T-cell (primary cell): ENCODE measurements at regions of chr4 and their contacts with region 1.

Region 1: DNA sequence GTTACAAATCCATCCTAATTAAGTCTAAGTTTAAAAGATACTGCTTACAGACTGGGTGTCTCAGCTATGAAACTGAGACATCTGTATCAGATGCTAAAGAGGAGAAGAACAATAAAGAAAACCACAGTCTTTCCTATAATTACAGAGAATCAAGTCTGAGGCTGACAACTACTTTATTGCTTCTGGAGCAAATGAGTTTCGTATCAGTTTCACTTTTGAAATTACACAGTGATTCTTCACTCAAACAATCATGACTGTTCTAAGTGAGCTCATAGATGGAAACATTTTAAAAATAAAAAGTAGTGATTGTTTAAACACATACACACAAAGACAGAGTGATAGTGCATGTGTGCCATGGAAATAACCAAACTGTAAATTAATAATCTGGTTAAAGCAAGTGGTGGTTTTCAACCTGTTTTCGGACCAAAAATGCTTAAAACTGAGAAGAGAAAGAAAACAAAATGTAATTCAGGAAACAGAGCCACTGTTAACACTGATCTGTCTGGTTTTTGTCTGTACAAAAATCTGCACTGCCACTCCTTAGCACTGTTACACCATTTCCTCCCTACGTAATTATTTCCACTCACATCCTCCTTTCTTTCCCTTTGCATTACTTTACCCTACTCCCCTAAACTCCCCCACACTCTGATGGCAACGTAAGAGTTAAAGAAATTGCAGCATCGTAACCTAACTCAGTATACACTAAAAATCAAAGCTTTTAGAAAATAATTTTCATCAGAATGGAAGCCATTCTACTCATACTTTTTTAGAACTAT is 12.5 kb downstream of the RFC1 start:
- DNase-seq: peak in 3 of 35 experiments; percentile 5 to 69 (median 21)
- ATAC-seq: peak; percentile 78 to 86 (median 81)
- H3K4me3 ChIP-seq: peak overlapping the region; percentile 51
- H3K4me3 Mint-ChIP-seq: peak overlapping the region; percentile 78 to 80 (median 80)
- H3K27ac ChIP-seq: peak overlapping the region; percentile 95
- H3K27ac Mint-ChIP-seq: peak overlapping the region; percentile 98 to 99
- H3K4me1 ChIP-seq: peaks cover 22% of the 10 kb centered on the region in 2 experiments
- H3K4me1 Mint-ChIP-seq: peaks cover 49 to 68% (median 57%) of the 10 kb centered on the region in 3 donors
- H3K27me3 ChIP-seq: no peaks in the 10 kb centered on the region
- H3K27me3 Mint-ChIP-seq: no peaks in the 10 kb centered on the region

Region 2: GRCh38 chr4:39331191-39331590 is 22.5 kb before region 1 on chr4:
- CTCF ChIA-PET with region 1: no interaction called
- POLR2A ChIA-PET with region 1: no interaction called
- DNase-seq: no peak
- ATAC-seq: no peak
- H3K4me3 ChIP-seq: no peak overlapping the region
- H3K4me3 Mint-ChIP-seq: no peak overlapping the region
- H3K27ac ChIP-seq: no peak overlapping the region
- H3K27ac Mint-ChIP-seq: no peak overlapping the region
- H3K4me1 ChIP-seq: no peaks in the 10 kb centered on the region
- H3K4me1 Mint-ChIP-seq: peaks cover 30 to 42% (median 40%) of the 10 kb centered on the region in 3 donors
- H3K27me3 ChIP-seq: no peaks in the 10 kb centered on the region
- H3K27me3 Mint-ChIP-seq: no peaks in the 10 kb centered on the region

Region 3: DNA sequence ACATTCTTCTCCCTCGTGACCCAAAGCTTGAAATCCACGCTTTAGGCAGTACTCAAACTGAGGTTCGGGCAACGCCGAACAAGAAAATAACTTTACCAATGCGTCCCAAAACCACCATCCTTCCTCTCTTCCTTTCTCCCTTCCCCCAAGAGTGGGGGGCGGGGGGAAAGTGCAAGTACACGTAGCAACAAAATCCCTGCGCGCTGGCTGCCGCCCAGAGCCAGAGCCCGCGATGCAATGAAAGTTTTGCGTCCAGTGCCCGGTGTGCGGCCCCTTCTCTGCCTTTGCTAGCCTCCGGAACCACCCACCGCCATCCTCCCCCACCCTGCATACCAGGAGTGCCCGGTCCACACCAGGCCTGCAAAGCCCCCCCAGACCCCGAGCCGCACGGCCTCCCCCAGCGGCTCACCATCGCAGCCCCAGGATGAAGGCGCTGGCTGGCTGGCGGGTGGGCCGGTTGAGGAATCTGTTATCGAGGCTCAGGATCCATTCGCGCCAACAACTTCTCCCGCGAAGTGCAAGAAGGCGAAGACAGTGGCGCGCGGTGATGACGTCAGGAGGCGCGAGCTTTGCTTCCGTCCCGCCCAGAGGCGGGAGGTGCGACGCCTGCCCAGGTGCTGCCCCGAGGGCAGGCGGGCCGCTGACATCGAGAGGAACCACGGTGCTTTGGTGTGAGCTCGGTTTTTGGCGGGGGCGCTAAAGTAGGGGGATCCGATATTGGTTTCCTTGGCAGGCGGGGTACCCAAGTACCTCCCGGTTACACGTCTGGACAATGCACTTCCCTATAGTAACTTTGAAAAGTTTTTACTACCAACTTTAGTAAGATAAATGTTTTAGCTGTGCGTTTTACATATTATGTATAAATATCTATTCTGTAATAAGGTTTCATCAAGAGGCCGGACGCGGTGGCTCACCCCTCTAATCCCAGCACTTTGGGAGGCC is 12.4 kb after region 1 on chr4 and contains the start of gene RFC1:
- CTCF ChIA-PET with region 1: interaction called, 11 to 12 read pairs
- POLR2A ChIA-PET with region 1: interaction called, 4 to 15 read pairs
- DNase-seq: peak; percentile 82 to 98 (median 92)
- ATAC-seq: peak; percentile 94 to 99 (median 98)
- H3K4me3 ChIP-seq: peak within 1 kb of the TSS; percentile 85 to 97
- H3K4me3 Mint-ChIP-seq: peak within 1 kb of the TSS; percentile 90 to 95 (median 91)
- H3K27ac ChIP-seq: peak within 1 kb of the TSS; percentile 69
- H3K27ac Mint-ChIP-seq: peak within 1 kb of the TSS; percentile 86
- H3K4me1 ChIP-seq: peaks cover 22 to 23% of the 10 kb centered on the region in 2 experiments
- H3K4me1 Mint-ChIP-seq: peaks cover 43 to 50% (median 47%) of the 10 kb centered on the region in 3 donors
- H3K27me3 ChIP-seq: no peaks in the 10 kb centered on the region
- H3K27me3 Mint-ChIP-seq: no peaks in the 10 kb centered on the region
- total RNA-seq, gene RFC1: 45.7 to 77.4 (median 54.5) TPM

Region 4: DNA sequence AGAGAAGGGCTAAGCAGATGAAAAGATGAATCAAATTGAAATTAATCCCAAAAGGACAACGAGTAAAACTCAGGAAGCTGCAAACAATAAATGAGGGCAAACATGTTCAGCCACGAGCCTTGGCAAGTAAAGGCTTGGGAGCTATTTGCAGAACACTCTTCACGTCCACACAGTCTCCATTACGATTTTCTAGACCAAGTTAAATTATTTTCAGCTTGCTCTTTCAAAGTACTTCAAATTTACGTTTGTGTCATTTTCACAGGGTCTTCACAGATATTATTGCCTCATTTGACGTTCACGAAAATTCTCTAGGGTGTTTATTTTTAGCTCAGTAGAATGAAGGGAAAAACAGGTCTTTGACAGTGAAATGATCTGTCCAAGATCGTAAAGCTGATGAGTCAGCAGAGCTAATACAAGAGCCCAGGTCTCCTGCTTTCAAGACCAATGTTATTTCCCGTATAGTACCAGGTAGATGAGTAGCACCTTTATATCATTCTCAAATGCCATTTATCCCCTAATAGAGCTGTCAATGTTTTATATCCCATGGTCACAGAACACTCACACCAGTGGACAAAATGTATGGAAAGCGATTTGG is 74.0 kb after region 1 on chr4:
- CTCF ChIA-PET with region 1: no interaction called
- POLR2A ChIA-PET with region 1: interaction called in 1 of 2 experiments, 10 read pairs
- DNase-seq: no peak
- ATAC-seq: no peak
- H3K4me3 ChIP-seq: no peak overlapping the region
- H3K4me3 Mint-ChIP-seq: no peak overlapping the region
- H3K27ac ChIP-seq: no peak overlapping the region
- H3K27ac Mint-ChIP-seq: no peak overlapping the region
- H3K4me1 ChIP-seq: no peaks in the 10 kb centered on the region
- H3K4me1 Mint-ChIP-seq: no peaks in the 10 kb centered on the region
- H3K27me3 ChIP-seq: no peaks in the 10 kb centered on the region
- H3K27me3 Mint-ChIP-seq: no peaks in the 10 kb centered on the region

Region 5: DNA sequence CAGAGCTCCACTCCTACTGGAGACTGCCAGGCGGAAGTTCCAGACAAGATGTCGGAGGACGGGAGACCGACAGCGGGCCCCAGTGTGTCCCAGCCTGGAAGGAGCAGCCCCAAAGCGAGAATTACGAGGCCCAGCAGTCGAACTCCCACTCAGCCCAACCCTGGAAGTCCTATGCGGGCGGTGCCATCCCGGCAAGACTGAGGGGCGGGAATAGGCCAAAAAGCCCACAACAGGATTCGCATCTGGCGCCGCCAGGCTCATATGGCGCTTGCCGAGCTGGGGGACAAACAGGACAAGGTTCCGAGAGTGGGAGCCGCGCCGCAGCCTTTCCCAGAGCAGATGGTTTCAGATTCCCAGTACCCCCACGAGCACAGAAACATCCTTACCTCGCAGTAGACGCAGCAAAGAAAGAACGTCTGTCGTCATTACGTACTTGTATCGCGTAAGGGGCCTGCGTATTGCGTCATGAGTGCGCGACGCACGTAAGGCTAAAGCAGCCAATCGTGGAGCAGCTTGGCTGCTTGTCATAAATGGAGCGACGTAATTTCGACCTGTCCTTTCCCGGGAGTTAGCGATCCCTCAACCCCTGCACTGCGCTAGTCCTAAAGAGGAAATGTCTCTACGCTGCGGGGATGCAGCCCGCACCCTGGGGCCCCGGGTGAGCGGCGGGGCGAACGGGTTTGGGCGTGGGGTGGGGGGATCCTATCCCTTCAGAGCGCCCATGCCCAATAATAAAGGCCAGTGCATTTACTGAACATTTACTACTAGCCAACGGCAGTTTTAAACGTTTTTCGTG is 105.0 kb after region 1 on chr4 and contains the starts of genes LIAS and RPL9:
- CTCF ChIA-PET with region 1: interaction called in 1 of 2 experiments, 5 read pairs
- POLR2A ChIA-PET with region 1: interaction called, 7 to 10 read pairs
- DNase-seq: peak; percentile 80 to 99 (median 91)
- ATAC-seq: peak; percentile 85 to 86 (median 86)
- H3K4me3 ChIP-seq: peak within 1 kb of the TSS; percentile 77 to 98
- H3K4me3 Mint-ChIP-seq: peak within 1 kb of the TSS; percentile 92 to 96 (median 95)
- H3K27ac ChIP-seq: peak within 1 kb of the TSS; percentile 97
- H3K27ac Mint-ChIP-seq: peak within 1 kb of the TSS; percentile 98 to 99
- H3K4me1 ChIP-seq: peaks cover 15 to 20% of the 10 kb centered on the region in 2 experiments
- H3K4me1 Mint-ChIP-seq: peaks cover 49 to 57% (median 51%) of the 10 kb centered on the region in 3 donors
- H3K27me3 ChIP-seq: no peaks in the 10 kb centered on the region
- H3K27me3 Mint-ChIP-seq: no peaks in the 10 kb centered on the region
- total RNA-seq, gene LIAS: 11.3 to 22.8 (median 19.5) TPM
- total RNA-seq, gene RPL9: 2,481 to 3,129 (median 2,646) TPM

Region 6: DNA sequence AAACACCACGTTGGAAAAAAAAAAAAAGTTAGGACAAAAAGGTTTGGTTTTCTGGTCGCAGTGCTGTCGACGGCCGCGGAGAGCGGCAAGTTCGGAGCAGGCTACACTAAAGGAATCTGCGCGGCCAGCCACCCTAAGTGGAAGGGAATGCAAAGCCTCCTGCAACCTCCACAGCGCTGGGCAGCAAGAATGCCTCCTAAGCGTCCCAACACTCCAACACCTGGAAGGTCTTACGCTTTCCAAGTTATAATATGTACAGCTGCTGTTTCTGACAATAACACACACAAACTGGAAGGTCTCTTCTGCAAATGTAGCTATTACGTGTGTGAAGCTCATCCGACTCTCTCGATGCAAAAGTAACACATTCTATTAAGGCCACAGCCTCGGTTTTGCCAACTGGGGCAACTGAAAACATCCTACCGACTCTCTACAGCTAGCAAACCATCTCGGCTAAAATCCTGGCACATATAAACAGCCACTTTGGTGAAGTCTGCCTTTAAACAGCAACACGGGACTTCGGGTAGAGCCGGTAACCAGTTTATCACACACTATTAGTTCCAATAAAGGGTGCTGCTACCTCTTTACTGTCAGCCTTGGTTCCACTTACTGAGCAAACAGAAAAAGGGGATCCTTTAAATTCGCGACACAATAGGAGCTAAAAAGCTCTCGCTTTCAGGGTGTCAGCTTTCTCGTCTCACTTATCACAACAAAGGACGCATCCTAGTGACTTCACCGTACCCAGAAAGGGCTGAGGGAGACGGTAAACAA is 284.1 kb after region 1 on chr4:
- CTCF ChIA-PET with region 1: no interaction called
- POLR2A ChIA-PET with region 1: interaction called in 1 of 2 experiments, 15 read pairs
- DNase-seq: peak in 28 of 35 experiments; percentile 2 to 61 (median 14)
- ATAC-seq: peak; percentile 17 to 42 (median 30)
- H3K4me3 ChIP-seq: peak overlapping the region; percentile 85 to 86
- H3K4me3 Mint-ChIP-seq: peak overlapping the region; percentile 90 to 93 (median 93)
- H3K27ac ChIP-seq: peak overlapping the region; percentile 68
- H3K27ac Mint-ChIP-seq: peak overlapping the region; percentile 90 to 95
- H3K4me1 ChIP-seq: peaks cover 8 to 19% of the 10 kb centered on the region in 2 experiments
- H3K4me1 Mint-ChIP-seq: peaks cover 42 to 49% (median 43%) of the 10 kb centered on the region in 3 donors
- H3K27me3 ChIP-seq: no peaks in the 10 kb centered on the region
- H3K27me3 Mint-ChIP-seq: no peaks in the 10 kb centered on the region

Region 7: GRCh38 chr4:39998659-39999345 is 645.1 kb after region 1 on chr4:
- CTCF ChIA-PET with region 1: no interaction called
- POLR2A ChIA-PET with region 1: no interaction called
- DNase-seq: no peak
- ATAC-seq: no peak
- H3K4me3 ChIP-seq: no peak overlapping the region
- H3K4me3 Mint-ChIP-seq: no peak overlapping the region
- H3K27ac ChIP-seq: no peak overlapping the region
- H3K27ac Mint-ChIP-seq: no peak overlapping the region
- H3K4me1 ChIP-seq: no peaks in the 10 kb centered on the region
- H3K4me1 Mint-ChIP-seq: no peaks in the 10 kb centered on the region
- H3K27me3 ChIP-seq: no peaks in the 10 kb centered on the region
- H3K27me3 Mint-ChIP-seq: peaks cover 0 to 4% of the 10 kb centered on the region in 2 donors